T-cell (primary cell): ENCODE measurements at regions of chr11 and their contacts with region 1.

Region 1: DNA sequence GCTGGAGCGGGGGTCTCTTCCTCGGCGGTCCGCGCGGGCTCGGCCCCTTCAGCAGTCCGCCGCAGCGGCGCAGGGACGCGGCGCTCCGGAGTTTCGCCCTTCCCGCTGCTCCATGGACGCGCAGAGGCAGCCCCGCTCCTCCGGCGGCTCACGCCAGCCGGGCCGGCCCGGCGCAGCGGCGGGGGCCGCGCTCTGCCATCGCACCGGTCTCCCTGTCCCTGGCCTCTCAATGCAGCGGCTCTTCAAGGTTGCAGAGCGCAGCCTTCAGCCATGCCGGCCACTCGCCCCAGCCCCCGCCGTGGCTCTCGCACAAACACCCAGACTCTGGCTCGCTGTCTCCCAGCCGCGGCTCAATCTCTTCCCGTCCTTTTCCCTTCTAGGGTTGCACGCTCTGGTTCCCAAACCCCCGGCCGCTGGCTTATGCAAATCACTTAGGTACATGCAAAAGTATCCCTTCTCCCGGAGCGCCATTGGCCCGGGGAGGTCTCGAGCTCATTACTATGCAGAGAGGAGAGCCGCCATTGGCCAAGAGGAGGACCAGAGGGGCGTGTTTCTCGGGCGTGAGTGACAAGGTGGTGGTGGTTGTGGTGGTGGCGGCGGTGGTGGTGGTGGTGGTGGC is at the start of gene LGR4:
- DNase-seq: peak; percentile 45 to 79 (median 67)
- ATAC-seq: peak; percentile 85 to 93 (median 86)
- H3K4me3 ChIP-seq: peak within 1 kb of the TSS; percentile 65 to 75
- H3K4me3 Mint-ChIP-seq: peak within 1 kb of the TSS; percentile 86 to 96 (median 94)
- H3K27ac ChIP-seq: no peak within 1 kb of the TSS
- H3K27ac Mint-ChIP-seq: peak within 1 kb of the TSS in 1 of 2 donors; percentile 50
- H3K4me1 ChIP-seq: peaks cover 2 to 13% of the 10 kb centered on the region in 2 experiments
- H3K4me1 Mint-ChIP-seq: peaks cover 17 to 23% (median 18%) of the 10 kb centered on the region in 3 donors
- H3K27me3 ChIP-seq: peaks cover 0 to 13% of the 10 kb centered on the region in 2 experiments
- H3K27me3 Mint-ChIP-seq: peaks cover 15% of the 10 kb centered on the region in 2 donors
- total RNA-seq, gene LGR4: 0.68 to 2.4 (median 1.2) TPM

Region 2: GRCh38 chr11:27362749-27363575 is 109.5 kb before region 1 on chr11 and contains the start of gene CCDC34:
- CTCF ChIA-PET with region 1: no interaction called
- POLR2A ChIA-PET with region 1: interaction called in 1 of 2 experiments, 10 read pairs
- DNase-seq: peak; percentile 71 to 94 (median 83)
- ATAC-seq: peak; percentile 97 to 99 (median 99)
- H3K4me3 ChIP-seq: peak within 1 kb of the TSS; percentile 58 to 74
- H3K4me3 Mint-ChIP-seq: peak within 1 kb of the TSS; percentile 91 to 93 (median 91)
- H3K27ac ChIP-seq: no peak within 1 kb of the TSS
- H3K27ac Mint-ChIP-seq: peak within 1 kb of the TSS; percentile 91
- H3K4me1 ChIP-seq: peaks cover 9 to 11% of the 10 kb centered on the region in 2 experiments
- H3K4me1 Mint-ChIP-seq: peaks cover 24 to 37% (median 33%) of the 10 kb centered on the region in 3 donors
- H3K27me3 ChIP-seq: no peaks in the 10 kb centered on the region
- H3K27me3 Mint-ChIP-seq: peaks cover 0 to 5% of the 10 kb centered on the region in 2 donors
- total RNA-seq, gene CCDC34: 1.4 to 4.2 (median 2.8) TPM

Region 3: DNA sequence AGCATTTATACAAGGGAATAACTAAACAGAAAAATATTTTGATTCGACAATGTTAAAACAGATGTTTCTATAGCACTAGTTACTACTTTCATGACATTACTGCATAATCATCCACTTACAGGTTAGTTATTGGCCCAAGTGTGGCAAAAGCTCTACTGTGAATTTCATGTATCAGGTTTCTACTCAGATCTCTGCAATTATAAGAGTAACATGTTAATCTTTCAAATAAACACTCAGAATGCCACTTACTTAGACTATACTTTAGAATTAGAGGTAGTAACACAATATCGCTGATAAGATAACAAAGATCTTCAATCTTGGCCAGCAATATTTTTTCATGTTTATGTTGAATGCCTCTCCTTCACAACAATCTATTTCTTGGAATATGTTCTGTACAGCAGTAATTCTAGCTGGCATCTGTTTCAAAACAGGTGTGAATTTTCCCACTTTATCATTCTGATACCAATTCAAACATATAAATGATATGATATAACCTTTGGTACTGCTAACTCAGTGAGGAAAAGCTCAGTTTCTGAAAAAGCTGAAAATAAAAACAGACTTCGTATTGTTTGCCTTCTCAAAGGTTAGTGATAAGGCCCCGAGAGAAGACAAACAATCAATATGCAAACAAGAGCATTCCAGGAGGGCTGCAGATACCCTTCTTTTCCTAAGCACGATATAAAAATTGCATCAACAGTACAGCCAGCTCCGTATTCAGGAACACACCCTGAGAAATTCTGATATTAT is 98.5 kb before region 1 on chr11:
- CTCF ChIA-PET with region 1: no interaction called
- POLR2A ChIA-PET with region 1: interaction called in 1 of 2 experiments, 14 read pairs
- DNase-seq: no peak
- ATAC-seq: no peak
- H3K4me3 ChIP-seq: no peak overlapping the region
- H3K4me3 Mint-ChIP-seq: no peak overlapping the region
- H3K27ac ChIP-seq: no peak overlapping the region
- H3K27ac Mint-ChIP-seq: no peak overlapping the region
- H3K4me1 ChIP-seq: no peaks in the 10 kb centered on the region
- H3K4me1 Mint-ChIP-seq: no peaks in the 10 kb centered on the region
- H3K27me3 ChIP-seq: no peaks in the 10 kb centered on the region
- H3K27me3 Mint-ChIP-seq: no peaks in the 10 kb centered on the region

Region 4: DNA sequence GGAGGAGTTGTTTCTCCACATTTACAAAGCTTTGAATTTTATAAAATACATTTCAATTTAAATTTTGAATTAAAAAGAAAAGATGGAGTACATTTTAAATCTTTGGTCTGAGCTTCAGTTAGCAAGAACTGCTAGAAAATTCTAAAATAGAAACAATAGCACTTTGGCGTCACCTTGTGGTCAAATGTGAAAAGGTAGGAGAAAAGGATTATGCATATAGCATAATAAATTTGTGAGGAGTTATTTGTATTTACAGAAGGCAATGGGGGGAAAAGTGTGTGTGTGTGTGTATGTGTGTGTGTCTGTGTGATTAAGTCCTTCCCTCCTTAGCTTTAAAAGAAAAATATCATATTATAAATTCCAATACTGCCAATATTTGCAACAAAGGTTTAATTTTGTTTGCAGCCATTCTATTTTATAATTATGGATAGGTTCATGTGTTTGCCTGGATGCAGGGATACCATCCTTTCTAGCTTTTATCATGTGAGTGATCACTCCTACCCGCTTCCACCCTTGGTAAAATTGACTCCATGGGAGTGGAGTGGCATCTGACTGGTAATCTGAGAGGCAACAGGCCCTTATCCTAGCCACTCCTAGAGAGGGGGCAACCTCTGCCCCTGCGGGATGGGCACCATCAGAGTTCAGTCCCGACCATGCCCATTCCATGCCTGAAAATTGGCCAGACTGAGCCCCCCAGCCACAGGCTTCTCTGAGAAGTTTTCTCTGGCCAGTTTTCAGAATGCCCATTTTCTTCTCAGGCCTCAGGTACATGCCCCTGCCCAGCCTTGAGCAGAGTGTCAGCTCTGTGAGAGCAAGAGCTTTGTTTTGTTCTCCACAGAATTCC is 13.6 kb after region 1 on chr11:
- CTCF ChIA-PET with region 1: interaction called, 7 to 15 read pairs
- POLR2A ChIA-PET with region 1: no interaction called
- DNase-seq: peak in 11 of 35 experiments; percentile 11 to 73 (median 26)
- ATAC-seq: peak in 2 of 4 experiments; percentile 46 to 51
- H3K4me3 ChIP-seq: no peak overlapping the region
- H3K4me3 Mint-ChIP-seq: no peak overlapping the region
- H3K27ac ChIP-seq: no peak overlapping the region
- H3K27ac Mint-ChIP-seq: no peak overlapping the region
- H3K4me1 ChIP-seq: no peaks in the 10 kb centered on the region
- H3K4me1 Mint-ChIP-seq: no peaks in the 10 kb centered on the region
- H3K27me3 ChIP-seq: no peaks in the 10 kb centered on the region
- H3K27me3 Mint-ChIP-seq: no peaks in the 10 kb centered on the region

Region 5: GRCh38 chr11:27497284-27497866 is 24.9 kb after region 1 on chr11:
- CTCF ChIA-PET with region 1: interaction called, 3 to 13 read pairs
- POLR2A ChIA-PET with region 1: no interaction called
- DNase-seq: peak in 1 of 35 experiments; percentile 41
- ATAC-seq: peak in 1 of 4 experiments; percentile 41
- H3K4me3 ChIP-seq: no peak overlapping the region
- H3K4me3 Mint-ChIP-seq: no peak overlapping the region
- H3K27ac ChIP-seq: no peak overlapping the region
- H3K27ac Mint-ChIP-seq: no peak overlapping the region
- H3K4me1 ChIP-seq: peaks cover 0 to 2% of the 10 kb centered on the region in 2 experiments
- H3K4me1 Mint-ChIP-seq: peaks cover 23 to 36% (median 30%) of the 10 kb centered on the region in 3 donors
- H3K27me3 ChIP-seq: no peaks in the 10 kb centered on the region
- H3K27me3 Mint-ChIP-seq: no peaks in the 10 kb centered on the region